ENCODE measurements at regions of chr3 and their contacts with region 1.

Region 1: GRCh38 chr3:106119614-106120082 is 250.8 kb upstream of the CBLB start:
- DNase-seq: no peak
- H3K4me3 Mint-ChIP-seq: peak overlapping the region; percentile 20
- H3K27ac Mint-ChIP-seq: peak overlapping the region; percentile 90
- H3K4me1 Mint-ChIP-seq: peaks cover 37% of the 10 kb centered on the region
- H3K27me3 Mint-ChIP-seq: no peaks in the 10 kb centered on the region

Region 2: GRCh38 chr3:105062853-105063252 is 1056.8 kb before region 1 on chr3:
- intact Hi-C with region 1: no loop called
- DNase-seq: no peak
- H3K4me3 Mint-ChIP-seq: no peak overlapping the region
- H3K27ac Mint-ChIP-seq: no peak overlapping the region
- H3K4me1 Mint-ChIP-seq: no peaks in the 10 kb centered on the region
- H3K27me3 Mint-ChIP-seq: no peaks in the 10 kb centered on the region

Region 3: DNA sequence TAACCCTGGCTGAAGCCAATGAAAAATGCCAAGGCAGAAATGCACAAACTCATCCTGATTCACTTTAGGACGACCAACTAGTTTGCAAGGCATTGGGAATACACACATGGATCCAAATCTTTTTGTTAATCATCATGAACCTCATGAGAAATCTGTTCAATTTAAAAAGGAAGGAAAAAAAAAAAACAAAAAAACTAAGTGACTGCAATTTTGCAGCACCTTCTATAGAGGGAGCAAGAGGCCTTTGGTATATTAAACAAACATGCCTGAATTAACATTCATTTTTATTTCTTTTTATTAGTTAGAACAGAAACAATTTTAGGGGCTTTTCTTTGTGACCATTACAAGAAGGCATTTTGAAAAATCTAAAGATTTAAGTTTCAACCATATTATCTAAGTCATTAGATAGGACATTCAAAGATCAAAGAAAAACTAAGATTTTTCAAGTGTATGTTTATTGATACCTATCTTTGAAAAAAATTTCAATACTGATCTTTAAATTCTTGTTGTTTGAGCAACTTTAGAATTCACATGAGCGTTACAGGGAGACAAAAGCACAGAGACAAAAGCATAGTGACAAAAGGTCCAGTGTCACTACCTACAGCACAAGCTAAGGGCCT is 433.3 kb before region 1 on chr3:
- intact Hi-C with region 1: loop called (anchors 5 kb)
- DNase-seq: no peak
- H3K4me3 Mint-ChIP-seq: no peak overlapping the region
- H3K27ac Mint-ChIP-seq: peak overlapping the region; percentile 54
- H3K4me1 Mint-ChIP-seq: peaks cover 32% of the 10 kb centered on the region
- H3K27me3 Mint-ChIP-seq: no peaks in the 10 kb centered on the region

Region 4: GRCh38 chr3:106068795-106069194 is 50.9 kb before region 1 on chr3:
- intact Hi-C with region 1: loop called (anchors 2 kb)
- DNase-seq: peak; percentile 3
- H3K4me3 Mint-ChIP-seq: no peak overlapping the region
- H3K27ac Mint-ChIP-seq: peak overlapping the region; percentile 87
- H3K4me1 Mint-ChIP-seq: peaks cover 15% of the 10 kb centered on the region
- H3K27me3 Mint-ChIP-seq: no peaks in the 10 kb centered on the region

Region 5: DNA sequence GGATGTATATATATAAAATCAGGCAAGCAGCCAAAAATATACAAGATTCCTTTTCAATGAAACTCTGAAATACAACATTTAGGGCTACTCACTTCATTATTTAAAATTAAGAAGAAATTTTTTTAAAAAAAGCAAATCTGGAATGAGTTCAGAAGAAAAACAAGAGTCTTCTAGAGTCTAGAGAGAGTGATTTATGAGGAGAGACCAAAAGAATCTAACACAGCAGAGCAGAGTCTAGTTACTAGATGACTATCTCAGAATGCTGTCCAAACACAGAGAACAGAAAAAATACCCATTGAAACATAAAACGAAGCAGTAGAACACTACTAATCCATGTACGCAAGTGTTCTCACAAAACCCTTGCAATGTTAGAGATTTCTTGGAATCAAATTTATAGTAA is 24.4 kb after region 1 on chr3:
- intact Hi-C with region 1: no loop called
- DNase-seq: no peak
- H3K4me3 Mint-ChIP-seq: no peak overlapping the region
- H3K27ac Mint-ChIP-seq: no peak overlapping the region
- H3K4me1 Mint-ChIP-seq: no peaks in the 10 kb centered on the region
- H3K27me3 Mint-ChIP-seq: no peaks in the 10 kb centered on the region

Region 6: DNA sequence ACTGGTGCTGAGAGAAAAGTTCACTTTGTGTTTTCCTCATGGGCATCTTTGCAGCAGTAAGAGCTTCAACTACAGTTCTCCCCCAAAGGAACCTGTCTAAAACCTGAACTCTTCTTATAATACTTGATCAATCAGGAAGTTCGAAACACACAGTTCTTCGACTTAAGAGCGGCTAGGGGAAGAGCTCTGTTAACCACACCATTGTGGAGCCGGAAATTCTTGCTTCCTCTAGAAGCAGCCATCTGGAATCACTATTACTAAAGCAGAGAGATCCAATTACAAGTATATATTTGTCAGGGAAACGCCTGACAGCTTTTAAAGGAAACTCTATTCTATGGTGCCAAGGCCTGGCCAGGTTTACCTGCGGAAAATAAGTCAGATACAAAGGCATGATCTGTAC is 86.5 kb after region 1 on chr3:
- intact Hi-C with region 1: loop called (anchors 1 kb)
- DNase-seq: no peak
- H3K4me3 Mint-ChIP-seq: peak overlapping the region; percentile 54
- H3K27ac Mint-ChIP-seq: peak overlapping the region; percentile 92
- H3K4me1 Mint-ChIP-seq: peaks cover 58% of the 10 kb centered on the region
- H3K27me3 Mint-ChIP-seq: no peaks in the 10 kb centered on the region

Region 7: GRCh38 chr3:106299300-106300098 is 179.9 kb after region 1 on chr3:
- intact Hi-C with region 1: loop called (anchors 1 kb)
- DNase-seq: no peak
- H3K4me3 Mint-ChIP-seq: peak overlapping the region; percentile 23
- H3K27ac Mint-ChIP-seq: peak overlapping the region; percentile 63
- H3K4me1 Mint-ChIP-seq: peaks cover 70% of the 10 kb centered on the region
- H3K27me3 Mint-ChIP-seq: no peaks in the 10 kb centered on the region

Region 8: DNA sequence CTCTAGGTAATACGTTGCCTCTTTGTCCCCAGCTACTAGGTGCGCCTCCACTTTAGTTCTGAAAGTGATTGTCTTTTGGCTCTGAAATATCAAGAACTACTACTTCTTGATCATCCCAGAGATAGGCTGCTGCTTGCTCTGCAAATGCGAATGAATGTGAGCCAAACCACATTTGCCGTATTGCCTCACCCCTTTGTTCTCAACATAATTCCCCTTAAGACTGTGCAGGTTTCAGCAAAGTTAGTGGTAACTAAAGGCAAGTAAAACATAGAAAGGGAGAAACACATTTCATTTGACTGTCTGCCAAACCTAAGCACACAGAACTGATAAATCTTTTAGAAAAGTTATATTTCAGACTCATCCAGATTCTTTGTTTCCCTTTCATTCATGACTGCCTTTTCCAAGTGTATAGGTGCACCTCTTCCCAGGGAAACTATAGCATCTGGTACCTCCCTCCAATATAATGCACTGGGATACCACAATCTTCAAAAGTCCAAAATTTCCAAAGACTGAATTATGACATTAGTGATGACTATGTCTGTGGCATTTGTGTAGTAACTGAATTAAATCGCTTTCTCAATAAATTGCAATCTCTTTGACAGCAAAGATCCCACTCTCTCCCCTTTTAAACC is 469.8 kb after region 1 on chr3:
- intact Hi-C with region 1: no loop called
- DNase-seq: no peak
- H3K4me3 Mint-ChIP-seq: no peak overlapping the region
- H3K27ac Mint-ChIP-seq: no peak overlapping the region
- H3K4me1 Mint-ChIP-seq: peaks cover 14% of the 10 kb centered on the region
- H3K27me3 Mint-ChIP-seq: no peaks in the 10 kb centered on the region

Region 9: GRCh38 chr3:106839576-106840280 is 720.1 kb after region 1 on chr3:
- intact Hi-C with region 1: no loop called
- DNase-seq: no peak
- H3K4me3 Mint-ChIP-seq: no peak overlapping the region
- H3K27ac Mint-ChIP-seq: no peak overlapping the region
- H3K4me1 Mint-ChIP-seq: no peaks in the 10 kb centered on the region
- H3K27me3 Mint-ChIP-seq: peaks cover 2% of the 10 kb centered on the region